Naive thymus-derived CD8-positive, alpha-beta T cell (primary cell): ENCODE measurements at regions of chr6 and their contacts with region 1.

Region 1: GRCh38 chr6:24949020-24949569 is 13.3 kb upstream of the RIPOR2 start:
- DNase-seq: peak in 9 of 10 donors; percentile 44 to 90 (median 68)
- ATAC-seq: peak; percentile 70 to 73
- H3K4me3 Mint-ChIP-seq: peak overlapping the region; percentile 52 to 81 (median 75)
- H3K27ac Mint-ChIP-seq: peak overlapping the region; percentile 70 to 100 (median 96)
- H3K4me1 Mint-ChIP-seq: peaks cover 30 to 84% (median 76%) of the 10 kb centered on the region in 4 donors
- H3K27me3 Mint-ChIP-seq: no peaks in the 10 kb centered on the region

Region 2: GRCh38 chr6:24855395-24856245 is 93.5 kb before region 1 on chr6:
- POLR2A ChIA-PET with region 1: interaction called, 16 read pairs
- DNase-seq: peak; percentile 38 to 83 (median 72)
- ATAC-seq: peak; percentile 39 to 67
- H3K4me3 Mint-ChIP-seq: peak overlapping the region; percentile 31 to 84 (median 72)
- H3K27ac Mint-ChIP-seq: peak overlapping the region; percentile 88 to 98 (median 94)
- H3K4me1 Mint-ChIP-seq: peaks cover 31 to 58% (median 53%) of the 10 kb centered on the region in 4 donors
- H3K27me3 Mint-ChIP-seq: no peaks in the 10 kb centered on the region

Region 3: GRCh38 chr6:24872779-24873178 is 76.3 kb before region 1 on chr6:
- POLR2A ChIA-PET with region 1: no interaction called
- DNase-seq: no peak
- ATAC-seq: no peak
- H3K4me3 Mint-ChIP-seq: no peak overlapping the region
- H3K27ac Mint-ChIP-seq: peak overlapping the region; percentile 32 to 96 (median 76)
- H3K4me1 Mint-ChIP-seq: peaks cover 24 to 84% (median 67%) of the 10 kb centered on the region in 4 donors
- H3K27me3 Mint-ChIP-seq: no peaks in the 10 kb centered on the region

Region 4: GRCh38 chr6:24919004-24919892 is 29.8 kb before region 1 on chr6:
- POLR2A ChIA-PET with region 1: interaction called, 1,085 read pairs
- DNase-seq: no peak
- ATAC-seq: peak; percentile 33 to 47
- H3K4me3 Mint-ChIP-seq: peak overlapping the region; percentile 66 to 91 (median 80)
- H3K27ac Mint-ChIP-seq: peak overlapping the region; percentile 84 to 99 (median 92)
- H3K4me1 Mint-ChIP-seq: peaks cover 56 to 96% (median 92%) of the 10 kb centered on the region in 4 donors
- H3K27me3 Mint-ChIP-seq: no peaks in the 10 kb centered on the region

Region 5: DNA sequence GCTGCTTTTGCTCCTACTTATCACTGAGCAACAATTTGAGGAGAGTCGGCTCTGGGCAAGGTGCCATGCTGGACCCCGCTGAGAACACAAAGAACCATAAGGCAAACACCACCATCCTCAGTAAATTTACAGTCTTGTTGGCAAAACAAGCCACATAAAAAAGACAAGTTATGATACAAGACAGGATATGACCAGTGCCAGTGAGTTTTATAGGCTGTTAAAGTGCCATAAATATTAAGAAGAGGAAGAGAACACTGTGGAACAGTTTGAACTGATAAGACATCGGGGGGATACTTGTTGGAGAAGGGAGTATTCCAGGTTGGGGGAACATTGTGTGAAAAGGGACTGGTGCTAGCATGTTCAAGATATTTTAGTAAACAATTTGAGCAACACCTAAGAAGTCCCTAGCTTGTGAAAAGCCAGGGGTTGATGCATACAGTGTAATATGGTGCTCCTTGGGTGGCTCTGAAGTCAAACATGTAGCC is 11.9 kb after region 1 on chr6:
- POLR2A ChIA-PET with region 1: interaction called, 145 read pairs
- DNase-seq: peak in 6 of 10 donors; percentile 11 to 70 (median 48)
- ATAC-seq: peak; percentile 74 to 93
- H3K4me3 Mint-ChIP-seq: peak overlapping the region; percentile 34 to 85 (median 67)
- H3K27ac Mint-ChIP-seq: peak overlapping the region; percentile 90 to 100 (median 96)
- H3K4me1 Mint-ChIP-seq: peaks cover 44 to 93% (median 83%) of the 10 kb centered on the region in 4 donors
- H3K27me3 Mint-ChIP-seq: no peaks in the 10 kb centered on the region

Region 6: GRCh38 chr6:24982231-24982630 is 33.1 kb after region 1 on chr6:
- POLR2A ChIA-PET with region 1: interaction called, 20 read pairs
- DNase-seq: no peak
- ATAC-seq: no peak
- H3K4me3 Mint-ChIP-seq: no peak overlapping the region
- H3K27ac Mint-ChIP-seq: peak overlapping the region in 2 of 10 donors; percentile 20 to 44
- H3K4me1 Mint-ChIP-seq: peaks cover 26 to 80% (median 78%) of the 10 kb centered on the region in 4 donors
- H3K27me3 Mint-ChIP-seq: no peaks in the 10 kb centered on the region

Region 7: GRCh38 chr6:25053875-25054371 is 104.8 kb after region 1 on chr6:
- POLR2A ChIA-PET with region 1: no interaction called
- DNase-seq: no peak
- ATAC-seq: no peak
- H3K4me3 Mint-ChIP-seq: no peak overlapping the region
- H3K27ac Mint-ChIP-seq: peak overlapping the region in 1 of 10 donors; percentile 39
- H3K4me1 Mint-ChIP-seq: peaks cover 25 to 81% (median 74%) of the 10 kb centered on the region in 4 donors
- H3K27me3 Mint-ChIP-seq: no peaks in the 10 kb centered on the region

Region 8: GRCh38 chr6:26204332-26205165 is 1255.5 kb after region 1 on chr6:
- POLR2A ChIA-PET with region 1: no interaction called
- DNase-seq: peak; percentile 69 to 97 (median 88)
- ATAC-seq: peak; percentile 68 to 71
- H3K4me3 Mint-ChIP-seq: no peak overlapping the region
- H3K27ac Mint-ChIP-seq: no peak overlapping the region
- H3K4me1 Mint-ChIP-seq: peaks cover 14 to 36% (median 26%) of the 10 kb centered on the region in 4 donors
- H3K27me3 Mint-ChIP-seq: peaks cover 0 to 4% (median 0%) of the 10 kb centered on the region in 5 donors